Ascending aorta (tissue), 2 donors: ENCODE measurements at regions of chr4 and their contacts with region 1.

Region 1: GRCh38 chr4:173924561-173924960 is 358.9 kb downstream of the FBXO8 start:
- DNase-seq: no peak
- H3K4me3 ChIP-seq: no peak overlapping the region
- H3K27ac ChIP-seq: peak overlapping the region; percentile 75 to 76
- H3K4me1 ChIP-seq: peaks cover 0 to 11% of the 10 kb centered on the region in 2 donors
- H3K27me3 ChIP-seq: no peaks in the 10 kb centered on the region
- CTCF ChIP-seq: no peak

Region 2: GRCh38 chr4:173752610-173753230 is 171.8 kb before region 1 on chr4:
- intact Hi-C with region 1: loop called (anchors 10 kb)
- DNase-seq: no peak
- H3K4me3 ChIP-seq: no peak overlapping the region
- H3K27ac ChIP-seq: no peak overlapping the region
- H3K4me1 ChIP-seq: no peaks in the 10 kb centered on the region
- H3K27me3 ChIP-seq: no peaks in the 10 kb centered on the region
- CTCF ChIP-seq: peak in 1 of 3 experiments; percentile 29

Region 3: DNA sequence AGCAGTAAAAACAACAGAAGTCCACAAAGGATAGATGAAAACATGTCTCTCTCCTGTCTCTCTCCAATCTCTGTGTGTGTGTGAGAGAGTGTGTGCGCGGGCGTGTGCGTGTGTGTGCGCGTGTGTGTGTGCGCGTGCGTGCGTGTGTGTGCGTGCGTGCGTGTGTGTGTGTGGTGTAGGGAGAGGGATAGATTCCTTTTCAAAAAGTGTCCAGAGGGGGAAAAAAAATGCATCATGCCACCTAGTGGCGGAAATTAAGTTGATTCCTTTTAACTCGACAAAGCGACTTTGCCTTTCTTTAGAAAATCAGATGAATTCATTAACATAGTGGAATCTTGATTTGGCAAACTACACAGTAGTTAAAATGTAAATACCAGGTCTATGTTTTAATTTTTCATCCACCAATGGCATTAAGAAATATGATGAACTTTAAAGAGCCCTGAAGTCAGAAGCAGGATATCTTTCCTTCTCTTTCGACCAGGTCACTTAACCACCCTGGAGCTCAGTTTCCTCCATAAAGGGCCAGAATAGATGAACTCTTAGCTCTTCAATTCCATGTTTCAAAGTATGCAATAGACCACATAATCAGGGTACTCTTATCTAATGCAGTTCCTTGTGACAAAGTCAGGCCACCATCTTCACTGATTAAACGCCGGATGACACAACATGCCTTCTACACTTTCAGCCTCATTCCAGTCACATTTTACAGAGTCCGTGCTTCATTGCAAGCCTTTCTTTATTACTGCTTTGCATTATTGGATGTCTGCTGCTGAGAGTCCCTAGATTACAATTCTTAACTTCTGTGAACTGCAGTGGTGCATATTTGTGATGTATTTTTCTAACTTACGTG is 196.1 kb after region 1 on chr4:
- intact Hi-C with region 1: loop called (anchors 5 kb)
- DNase-seq: peak in 1 of 2 donors; percentile 70
- H3K4me3 ChIP-seq: peak overlapping the region; percentile 33 to 53
- H3K27ac ChIP-seq: no peak overlapping the region
- H3K4me1 ChIP-seq: no peaks in the 10 kb centered on the region
- H3K27me3 ChIP-seq: no peaks in the 10 kb centered on the region
- CTCF ChIP-seq: peak; percentile 38 to 61 (median 50)